ENCODE measurements at regions of chr6 and their contacts with region 1.

Region 1: DNA sequence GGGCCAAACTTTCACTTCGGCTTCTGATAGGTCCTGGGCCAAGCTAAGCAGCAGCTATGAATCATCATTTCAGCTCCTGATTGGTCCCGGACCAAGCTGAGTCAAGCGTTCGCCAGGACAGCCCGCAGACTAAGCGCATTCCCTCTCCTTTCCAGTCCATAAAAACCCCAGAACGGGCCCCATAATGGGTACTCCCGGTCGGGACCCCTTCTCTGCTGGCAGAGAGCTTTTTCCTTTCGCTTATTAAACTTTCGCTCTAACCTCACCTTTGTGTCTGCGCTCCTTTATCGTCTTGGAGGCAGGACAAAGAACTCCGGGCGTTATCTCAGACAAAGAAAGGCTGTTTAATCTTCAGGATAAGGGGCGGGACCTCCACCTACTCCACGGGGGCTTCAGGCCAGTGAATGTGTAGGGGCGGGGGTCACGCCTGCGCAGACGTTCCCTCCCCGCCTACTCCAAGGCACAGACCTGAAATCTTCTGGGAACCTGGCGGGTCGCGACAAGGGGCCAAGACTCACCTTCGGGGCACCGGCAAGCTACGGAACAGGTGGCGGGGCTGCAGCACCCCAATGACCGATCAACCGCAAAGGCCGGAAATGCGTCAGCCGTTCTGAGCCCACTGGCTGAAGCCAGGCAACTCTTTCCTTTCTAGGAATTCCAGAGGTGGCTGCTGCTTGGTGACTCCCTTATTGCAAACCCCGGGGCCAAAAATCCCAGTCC is at the start of gene ZSCAN31:
- DNase-seq: peak; percentile 57 to 99
- H3K4me3 ChIP-seq: peak within 1 kb of the TSS; percentile 69 to 83
- H3K27ac ChIP-seq: peak within 1 kb of the TSS; percentile 96 to 99
- H3K4me1 ChIP-seq: peaks cover 0 to 8% of the 10 kb centered on the region in 2 donors
- H3K27me3 ChIP-seq: no peaks in the 10 kb centered on the region
- CTCF ChIP-seq: no peak
- total RNA-seq, gene ZSCAN31: 0.21 TPM

Region 2: GRCh38 chr6:27902335-27903314 is 433.1 kb before region 1 on chr6:
- intact Hi-C with region 1: loop called (anchors 5 kb)
- DNase-seq: peak in 1 of 2 donors; percentile 93
- H3K4me3 ChIP-seq: peak overlapping the region; percentile 59 to 73
- H3K27ac ChIP-seq: peak overlapping the region; percentile 87 to 94
- H3K4me1 ChIP-seq: peaks cover 0 to 3% of the 10 kb centered on the region in 2 donors
- H3K27me3 ChIP-seq: no peaks in the 10 kb centered on the region
- CTCF ChIP-seq: no peak

Region 3: GRCh38 chr6:28136585-28137504 is 198.9 kb before region 1 on chr6:
- intact Hi-C with region 1: loop called (anchors 5 kb)
- DNase-seq: peak; percentile 60 to 95
- H3K4me3 ChIP-seq: peak overlapping the region; percentile 74 to 97
- H3K27ac ChIP-seq: peak overlapping the region; percentile 95 to 98
- H3K4me1 ChIP-seq: peaks cover 0 to 26% of the 10 kb centered on the region in 2 donors
- H3K27me3 ChIP-seq: no peaks in the 10 kb centered on the region
- CTCF ChIP-seq: no peak

Region 4: GRCh38 chr6:28266962-28267694 is 68.6 kb before region 1 on chr6 and contains the start of gene ZSCAN26:
- intact Hi-C with region 1: loop called (anchors 2 kb)
- DNase-seq: peak; percentile 21 to 89
- H3K4me3 ChIP-seq: peak within 1 kb of the TSS; percentile 70 to 80
- H3K27ac ChIP-seq: peak within 1 kb of the TSS; percentile 76 to 82
- H3K4me1 ChIP-seq: peaks cover 0 to 15% of the 10 kb centered on the region in 2 donors
- H3K27me3 ChIP-seq: no peaks in the 10 kb centered on the region
- CTCF ChIP-seq: no peak
- total RNA-seq, gene ZSCAN26: 2.6 TPM

Region 5: DNA sequence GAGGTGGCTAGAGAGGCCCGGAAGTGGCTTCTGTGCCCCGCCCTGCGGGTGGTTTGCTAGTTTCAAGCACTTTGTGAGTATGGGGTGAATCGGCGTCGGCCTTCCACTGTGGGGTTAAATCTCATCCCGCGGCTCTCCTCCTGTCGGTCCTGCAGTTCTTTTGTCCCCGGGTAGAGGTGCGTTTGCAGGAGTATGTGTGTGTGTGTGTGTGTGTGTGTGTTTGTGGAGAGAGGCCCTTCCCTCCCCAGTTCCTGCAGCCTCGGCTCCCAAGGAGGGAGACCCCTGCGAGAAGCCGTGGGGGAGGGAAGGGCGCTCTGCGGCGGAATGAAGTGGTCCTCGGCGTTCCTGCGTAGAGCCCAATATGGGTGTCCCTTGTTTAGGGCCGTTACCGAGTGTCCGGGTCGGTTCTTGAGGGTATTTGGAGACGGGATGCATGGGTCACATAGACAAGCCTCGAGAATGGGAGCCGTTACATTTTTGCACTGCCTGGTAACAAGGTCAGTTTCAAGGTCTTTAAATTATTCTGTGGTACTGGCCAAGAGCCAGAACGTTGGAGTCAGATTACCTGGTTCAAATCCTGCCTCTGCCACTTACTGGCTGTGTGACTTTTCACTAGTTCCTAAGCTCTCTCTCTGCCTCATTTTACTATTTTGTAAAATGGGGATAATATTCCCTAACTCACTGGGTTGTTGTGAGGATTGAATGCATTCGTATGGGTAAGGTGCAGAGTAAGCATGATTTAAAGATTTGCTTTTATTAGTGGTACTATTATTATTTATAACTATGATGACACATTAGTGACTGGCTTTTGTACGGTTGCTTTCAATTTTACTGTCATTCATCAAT is 14.4 kb after region 1 on chr6 and contains the start of gene ZKSCAN3:
- intact Hi-C with region 1: loop called (anchors 1 kb)
- DNase-seq: peak; percentile 29 to 90
- H3K4me3 ChIP-seq: peak within 1 kb of the TSS; percentile 64 to 90
- H3K27ac ChIP-seq: peak within 1 kb of the TSS; percentile 50 to 60
- H3K4me1 ChIP-seq: peaks cover 0 to 10% of the 10 kb centered on the region in 2 donors
- H3K27me3 ChIP-seq: no peaks in the 10 kb centered on the region
- CTCF ChIP-seq: no peak
- total RNA-seq, gene ZKSCAN3: 0.21 TPM

Region 6: DNA sequence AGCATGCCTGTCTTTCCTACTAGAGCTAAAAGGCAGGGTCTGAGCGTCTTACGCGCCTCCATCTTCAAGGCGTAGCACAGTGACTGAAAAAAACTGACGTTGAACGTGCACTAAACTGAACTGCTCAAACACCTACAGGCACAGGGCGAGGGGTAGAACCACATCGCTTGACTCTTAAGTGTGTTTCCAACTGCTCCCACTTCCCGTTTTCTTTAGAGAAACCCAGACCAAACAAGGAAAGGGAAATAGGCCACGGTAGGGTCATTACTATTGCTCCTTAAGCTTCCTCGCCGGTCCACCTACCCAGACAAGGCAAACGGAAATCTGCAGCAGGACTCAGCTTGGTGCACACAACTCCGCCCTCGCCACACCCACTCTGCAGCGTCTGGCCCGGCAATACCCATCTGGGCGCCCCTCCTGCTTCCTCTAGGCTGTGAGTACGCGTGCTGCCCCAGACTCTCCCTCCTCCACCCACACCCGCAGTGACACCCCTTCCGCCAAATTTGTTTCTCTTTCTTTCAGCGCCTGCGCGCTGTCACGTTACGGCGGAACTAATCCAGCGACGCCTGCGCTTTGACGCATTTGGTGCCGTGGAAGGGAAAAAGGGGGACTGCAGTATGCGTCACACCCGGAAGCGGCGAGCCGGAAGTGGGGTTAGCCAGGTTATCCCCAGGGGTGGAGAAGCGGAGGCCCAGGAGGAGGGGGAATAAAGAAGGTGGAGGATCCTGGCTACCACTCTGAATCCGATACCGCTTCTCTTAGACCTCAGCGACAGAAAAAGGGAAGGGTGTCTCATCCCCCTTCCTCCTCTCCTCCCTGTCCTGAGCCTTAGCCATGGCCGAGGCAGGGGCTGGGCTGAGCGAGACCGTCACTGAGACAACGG is 1731.1 kb after region 1 on chr6 and contains the start of gene PPP1R11:
- intact Hi-C with region 1: loop called (anchors 10 kb)
- DNase-seq: peak; percentile 98 to 99
- H3K4me3 ChIP-seq: peak within 1 kb of the TSS; percentile 75 to 77
- H3K27ac ChIP-seq: peak within 1 kb of the TSS; percentile 77 to 85
- H3K4me1 ChIP-seq: peaks cover 4 to 20% of the 10 kb centered on the region in 2 donors
- H3K27me3 ChIP-seq: no peaks in the 10 kb centered on the region
- CTCF ChIP-seq: no peak
- total RNA-seq, gene PPP1R11: 7.1 TPM

Measured in ascending aorta (tissue), 2 donors.